ENCODE measurements at regions of chr10 and their contacts with region 1.

Region 1: DNA sequence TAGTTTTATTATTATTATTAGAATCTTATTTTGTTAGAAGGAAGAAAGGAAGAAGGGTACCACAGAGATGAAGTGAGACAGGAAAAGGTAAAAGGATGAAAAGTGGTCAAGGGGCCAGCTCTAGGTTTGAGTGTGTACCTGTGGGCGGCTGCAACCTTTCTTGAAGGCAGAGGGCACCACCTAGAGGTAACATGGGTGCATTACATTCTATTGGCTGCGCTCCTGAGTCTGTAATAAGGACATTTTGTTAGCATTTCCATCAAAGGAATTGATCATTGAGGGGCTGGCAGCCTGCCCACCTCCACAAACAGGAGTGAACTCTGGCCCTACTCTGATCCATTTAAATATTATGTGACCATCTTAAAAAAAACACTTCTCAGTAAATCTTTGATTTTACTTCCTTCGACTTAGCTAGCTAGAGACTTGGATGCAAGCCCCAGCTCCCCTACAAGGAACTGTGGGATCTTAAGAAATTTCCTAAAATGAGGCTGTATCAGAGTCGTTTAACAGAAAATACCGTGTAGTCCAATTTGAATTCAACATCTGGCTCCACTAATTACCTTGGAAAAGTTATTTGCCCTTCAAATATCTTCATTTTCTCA is 610.4 kb downstream of the IPMK start:
- DNase-seq: peak in 2 of 14 experiments; percentile 17 to 20
- ATAC-seq: no peak
- H3K4me3 ChIP-seq: no peak overlapping the region
- H3K4me3 Mint-ChIP-seq: no peak overlapping the region
- H3K27ac ChIP-seq: no peak overlapping the region
- H3K27ac Mint-ChIP-seq: no peak overlapping the region
- H3K4me1 ChIP-seq: no peaks in the 10 kb centered on the region
- H3K4me1 Mint-ChIP-seq: no peaks in the 10 kb centered on the region
- H3K27me3 ChIP-seq: no peaks in the 10 kb centered on the region
- H3K27me3 Mint-ChIP-seq: no peaks in the 10 kb centered on the region
- CTCF ChIP-seq: peak; percentile 23

Region 2: GRCh38 chr10:57593983-57594573 is 63.2 kb before region 1 on chr10:
- CTCF ChIA-PET with region 1: no interaction called
- POLR2A ChIA-PET with region 1: no interaction called
- intact Hi-C with region 1: loop called in 1 of 2 experiments (anchors 10 kb)
- DNase-seq: no peak
- ATAC-seq: no peak
- H3K4me3 ChIP-seq: no peak overlapping the region
- H3K4me3 Mint-ChIP-seq: no peak overlapping the region
- H3K27ac ChIP-seq: no peak overlapping the region
- H3K27ac Mint-ChIP-seq: no peak overlapping the region
- H3K4me1 ChIP-seq: no peaks in the 10 kb centered on the region
- H3K4me1 Mint-ChIP-seq: no peaks in the 10 kb centered on the region
- H3K27me3 ChIP-seq: no peaks in the 10 kb centered on the region
- H3K27me3 Mint-ChIP-seq: no peaks in the 10 kb centered on the region
- CTCF ChIP-seq: no peak

Region 3: DNA sequence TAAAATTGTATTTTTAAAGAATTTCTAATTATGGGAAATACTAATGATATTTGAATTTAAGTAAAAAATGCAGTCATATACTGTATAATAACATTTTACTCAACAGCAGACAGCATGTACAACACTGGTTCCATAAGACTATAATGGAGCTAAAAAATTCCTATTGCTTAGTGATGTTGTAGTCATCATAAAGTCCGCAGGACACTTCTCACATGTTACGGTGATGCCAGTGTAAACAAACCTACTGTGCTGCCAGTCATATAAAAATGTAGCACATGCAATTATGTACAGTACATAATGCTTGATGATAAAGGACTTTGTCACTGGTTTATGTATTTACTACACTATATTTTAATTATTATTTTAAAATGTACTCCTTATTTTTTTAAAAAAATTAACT is 18.9 kb before region 1 on chr10:
- CTCF ChIA-PET with region 1: no interaction called
- POLR2A ChIA-PET with region 1: no interaction called
- intact Hi-C with region 1: no loop called
- DNase-seq: no peak
- ATAC-seq: no peak
- H3K4me3 ChIP-seq: no peak overlapping the region
- H3K4me3 Mint-ChIP-seq: no peak overlapping the region
- H3K27ac ChIP-seq: no peak overlapping the region
- H3K27ac Mint-ChIP-seq: no peak overlapping the region
- H3K4me1 ChIP-seq: no peaks in the 10 kb centered on the region
- H3K4me1 Mint-ChIP-seq: no peaks in the 10 kb centered on the region
- H3K27me3 ChIP-seq: no peaks in the 10 kb centered on the region
- H3K27me3 Mint-ChIP-seq: no peaks in the 10 kb centered on the region
- CTCF ChIP-seq: no peak

Measured in CD4-positive, alpha-beta T cell (primary cell).